ENCODE measurements at regions of chr18 and their contacts with region 1.

Region 1: GRCh38 chr18:50429207-50429948 is 54.5 kb downstream of the SKA1 start:
- DNase-seq: peak; percentile 29
- H3K4me3 ChIP-seq: no peak overlapping the region
- H3K27ac ChIP-seq: no peak overlapping the region
- H3K4me1 ChIP-seq: no peaks in the 10 kb centered on the region
- H3K27me3 ChIP-seq: peaks cover 2 to 4% of the 10 kb centered on the region in 2 experiments
- CTCF ChIP-seq: peak; percentile 28 to 29
- POLR2A ChIP-seq: no peak

Region 2: GRCh38 chr18:50009773-50010335 is 419.5 kb before region 1 on chr18:
- CTCF ChIA-PET with region 1: interaction called, 7 read pairs
- POLR2A ChIA-PET with region 1: no interaction called
- dilution Hi-C with region 1: no loop called
- intact Hi-C with region 1: loop called (anchors 10 kb)
- DNase-seq: peak; percentile 40
- H3K4me3 ChIP-seq: no peak overlapping the region
- H3K27ac ChIP-seq: no peak overlapping the region
- H3K4me1 ChIP-seq: no peaks in the 10 kb centered on the region
- H3K27me3 ChIP-seq: peaks cover 2% of the 10 kb centered on the region in 2 experiments
- CTCF ChIP-seq: peak; percentile 58 to 63
- POLR2A ChIP-seq: no peak

Region 3: DNA sequence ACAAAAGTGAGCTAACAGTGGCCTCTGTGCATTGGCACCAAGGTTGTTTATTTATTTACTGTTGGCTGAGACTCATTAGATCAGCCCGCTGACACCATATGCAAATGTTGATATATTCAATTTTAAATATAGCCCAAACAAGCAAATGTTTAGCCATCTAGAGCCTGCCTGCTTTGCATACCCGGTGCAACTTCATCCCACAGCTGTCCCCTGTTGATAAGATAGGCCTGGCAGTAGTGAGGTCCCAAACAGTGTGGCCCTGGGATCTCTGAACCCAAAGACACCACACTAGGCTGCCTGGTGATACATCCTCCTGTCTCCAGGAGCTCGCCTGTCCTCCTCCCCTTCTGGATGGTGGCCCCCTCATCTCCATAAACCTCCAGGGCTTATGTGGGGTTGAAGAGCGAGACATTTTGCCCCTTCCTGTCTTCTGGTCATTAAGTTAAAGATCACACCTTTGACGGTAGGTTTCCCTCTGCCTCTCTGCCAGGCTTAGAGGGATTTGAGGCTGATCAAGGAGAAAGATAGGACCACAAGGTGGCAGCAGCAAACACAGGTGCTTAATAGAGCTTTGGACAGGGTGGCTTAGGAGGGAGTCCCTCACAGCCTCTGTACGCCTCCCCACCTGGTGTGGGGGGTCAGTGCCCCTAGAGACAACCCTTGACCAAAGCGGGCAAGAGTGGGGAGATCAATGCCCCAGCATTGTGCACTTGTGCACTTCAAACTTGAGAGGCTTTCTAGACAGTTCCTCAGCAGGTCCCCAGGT is 210.8 kb before region 1 on chr18:
- CTCF ChIA-PET with region 1: interaction called, 35 read pairs
- POLR2A ChIA-PET with region 1: no interaction called
- dilution Hi-C with region 1: no loop called
- intact Hi-C with region 1: loop called (anchors 2 kb)
- DNase-seq: peak; percentile 20
- H3K4me3 ChIP-seq: no peak overlapping the region
- H3K27ac ChIP-seq: no peak overlapping the region
- H3K4me1 ChIP-seq: no peaks in the 10 kb centered on the region
- H3K27me3 ChIP-seq: no peaks in the 10 kb centered on the region
- CTCF ChIP-seq: peak in 1 of 2 donors; percentile 41
- POLR2A ChIP-seq: no peak

Region 4: DNA sequence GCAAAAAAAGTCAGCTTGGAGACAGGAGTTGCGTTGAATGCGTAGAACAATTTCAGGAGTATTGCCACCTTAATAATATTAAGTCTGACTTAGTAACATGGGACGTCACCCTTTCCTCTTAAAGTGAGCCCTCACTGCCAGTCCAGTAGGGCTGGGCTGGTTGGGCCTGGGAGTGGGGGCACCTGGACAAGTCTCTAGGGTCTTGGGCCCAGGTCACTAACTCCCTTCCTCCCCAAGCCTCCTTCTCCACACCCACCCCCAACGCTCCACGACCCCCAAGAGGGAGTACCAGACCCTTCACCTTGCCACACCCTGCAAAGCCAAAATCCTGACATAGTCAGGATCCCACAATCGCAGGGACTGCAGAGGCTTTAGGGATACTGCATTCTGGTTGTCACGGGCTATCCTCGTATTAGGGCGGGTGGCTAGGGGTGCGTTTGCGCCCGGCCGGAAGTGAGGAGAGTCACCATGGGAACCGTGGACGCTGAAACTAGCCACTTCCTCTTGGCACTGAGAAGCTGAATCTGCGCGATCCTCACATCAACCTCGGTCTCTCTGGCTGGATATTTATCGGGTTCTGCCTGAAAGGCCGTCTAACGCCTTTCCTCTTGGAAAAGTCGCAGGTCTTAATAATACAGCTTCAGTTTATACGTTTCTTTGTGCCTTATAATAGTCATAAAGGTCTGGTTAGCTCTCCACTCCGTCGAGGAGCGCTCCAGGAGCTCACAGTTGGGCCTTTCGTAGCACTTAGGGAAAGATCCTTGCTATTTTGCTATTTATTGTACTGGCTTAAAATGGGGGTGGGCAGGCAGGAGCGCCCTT is 131.5 kb before region 1 on chr18:
- CTCF ChIA-PET with region 1: no interaction called
- POLR2A ChIA-PET with region 1: no interaction called
- dilution Hi-C with region 1: no loop called
- intact Hi-C with region 1: loop called (anchors 5 kb)
- DNase-seq: peak; percentile 62
- H3K4me3 ChIP-seq: peak overlapping the region in 2 of 3 experiments; percentile 6 to 32
- H3K27ac ChIP-seq: no peak overlapping the region
- H3K4me1 ChIP-seq: no peaks in the 10 kb centered on the region
- H3K27me3 ChIP-seq: peaks cover 25 to 32% of the 10 kb centered on the region in 2 experiments
- CTCF ChIP-seq: no peak
- POLR2A ChIP-seq: no peak

Region 5: GRCh38 chr18:50397023-50397422 is 32.4 kb before region 1 on chr18:
- CTCF ChIA-PET with region 1: interaction called, 10 read pairs
- POLR2A ChIA-PET with region 1: no interaction called
- dilution Hi-C with region 1: no loop called
- intact Hi-C with region 1: no loop called
- DNase-seq: no peak
- H3K4me3 ChIP-seq: no peak overlapping the region
- H3K27ac ChIP-seq: no peak overlapping the region
- H3K4me1 ChIP-seq: no peaks in the 10 kb centered on the region
- H3K27me3 ChIP-seq: peaks cover 19 to 34% of the 10 kb centered on the region in 2 experiments
- CTCF ChIP-seq: no peak
- POLR2A ChIP-seq: no peak

Region 6: GRCh38 chr18:50410894-50411293 is 18.5 kb before region 1 on chr18:
- CTCF ChIA-PET with region 1: interaction called, 19 read pairs
- POLR2A ChIA-PET with region 1: no interaction called
- dilution Hi-C with region 1: no loop called
- intact Hi-C with region 1: no loop called
- DNase-seq: no peak
- H3K4me3 ChIP-seq: no peak overlapping the region
- H3K27ac ChIP-seq: no peak overlapping the region
- H3K4me1 ChIP-seq: no peaks in the 10 kb centered on the region
- H3K27me3 ChIP-seq: peaks cover 12 to 21% of the 10 kb centered on the region in 2 experiments
- CTCF ChIP-seq: no peak
- POLR2A ChIP-seq: no peak

Region 7: GRCh38 chr18:50933684-50934083 is 504.3 kb after region 1 on chr18:
- CTCF ChIA-PET with region 1: no interaction called
- POLR2A ChIA-PET with region 1: no interaction called
- dilution Hi-C with region 1: no loop called
- intact Hi-C with region 1: no loop called
- DNase-seq: no peak
- H3K4me3 ChIP-seq: no peak overlapping the region
- H3K27ac ChIP-seq: no peak overlapping the region
- H3K4me1 ChIP-seq: no peaks in the 10 kb centered on the region
- H3K27me3 ChIP-seq: no peaks in the 10 kb centered on the region
- CTCF ChIP-seq: no peak
- POLR2A ChIP-seq: no peak

Measured in endothelial cell of umbilical vein (primary cell).